OCI-LY7 (cell line): ENCODE measurements at regions of chr5 and their contacts with region 1.

Region 1: GRCh38 chr5:52799983-52800393 is 12.3 kb downstream of the ITGA1 start:
- DNase-seq: peak; percentile 96
- H3K4me3 ChIP-seq: peak overlapping the region; percentile 77
- H3K27ac ChIP-seq: peak overlapping the region; percentile 87
- H3K4me1 ChIP-seq: peaks cover 20% of the 10 kb centered on the region
- CTCF ChIP-seq: no peak

Region 2: GRCh38 chr5:52811067-52811749 is 11.2 kb after region 1 on chr5:
- CTCF ChIA-PET with region 1: interaction called, 5 read pairs
- POLR2A ChIA-PET with region 1: interaction called, 21 read pairs
- intact Hi-C with region 1: no loop called
- DNase-seq: no peak
- H3K4me3 ChIP-seq: no peak overlapping the region
- H3K27ac ChIP-seq: no peak overlapping the region
- H3K4me1 ChIP-seq: no peaks in the 10 kb centered on the region
- CTCF ChIP-seq: no peak

Region 3: GRCh38 chr5:53109443-53110127 is 309.6 kb after region 1 on chr5 and contains the start of gene MOCS2:
- CTCF ChIA-PET with region 1: no interaction called
- POLR2A ChIA-PET with region 1: interaction called, 13 read pairs
- intact Hi-C with region 1: loop called (anchors 2 kb)
- DNase-seq: peak; percentile 92
- H3K4me3 ChIP-seq: peak within 1 kb of the TSS; percentile 74
- H3K27ac ChIP-seq: no peak within 1 kb of the TSS
- H3K4me1 ChIP-seq: peaks cover 16% of the 10 kb centered on the region
- CTCF ChIP-seq: no peak
- total RNA-seq, gene MOCS2: 11.6 and 12.1 TPM in 2 replicates